Mammary epithelial cell (primary cell): ENCODE measurements at regions of chr3 and their contacts with region 1.

Region 1: DNA sequence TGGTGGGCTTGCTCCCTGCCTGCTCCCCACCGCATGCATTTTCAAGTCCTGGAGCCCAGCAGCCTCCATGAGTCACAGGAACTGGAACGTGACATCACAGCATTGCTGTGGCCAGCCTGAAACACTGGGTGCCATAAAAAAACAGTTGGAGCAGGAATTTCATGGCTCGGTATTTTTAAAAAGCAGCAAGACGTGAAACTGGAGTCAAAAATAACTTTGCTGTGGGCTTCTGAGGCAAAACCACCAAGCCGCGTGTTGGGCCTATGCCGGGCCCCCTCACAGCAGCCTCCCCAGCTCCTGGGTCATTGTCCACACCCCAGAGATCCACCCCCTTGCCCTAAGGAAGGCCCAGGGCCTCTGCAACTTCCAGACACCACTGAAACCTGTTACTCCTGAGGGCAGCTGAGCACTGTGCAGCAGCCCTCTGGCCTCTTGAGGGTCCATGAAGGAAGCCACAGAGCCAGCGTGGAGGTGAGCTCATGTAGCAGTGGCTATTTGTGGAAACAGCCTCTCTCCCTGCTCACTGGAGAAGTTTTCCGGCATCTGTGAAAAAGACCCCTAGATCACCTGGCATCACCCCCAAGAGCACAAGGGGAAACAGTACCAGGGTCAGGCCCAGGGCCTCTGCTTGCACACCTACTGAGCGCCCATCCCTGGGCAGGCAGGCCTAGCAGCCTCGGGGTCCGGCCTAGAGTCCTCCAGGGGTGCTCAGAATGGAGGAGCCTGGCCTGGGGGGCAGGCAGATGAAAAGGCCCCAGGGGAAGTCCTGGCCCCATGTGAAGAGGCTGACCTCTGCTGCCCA is 34.0 kb upstream of the DUSP7 start:
- DNase-seq: peak; percentile 54
- H3K4me3 ChIP-seq: no peak overlapping the region
- H3K27ac ChIP-seq: peak overlapping the region; percentile 4
- H3K4me1 ChIP-seq: peaks cover 20% of the 10 kb centered on the region
- H3K27me3 ChIP-seq: no peaks in the 10 kb centered on the region
- CTCF ChIP-seq: no peak

Region 2: DNA sequence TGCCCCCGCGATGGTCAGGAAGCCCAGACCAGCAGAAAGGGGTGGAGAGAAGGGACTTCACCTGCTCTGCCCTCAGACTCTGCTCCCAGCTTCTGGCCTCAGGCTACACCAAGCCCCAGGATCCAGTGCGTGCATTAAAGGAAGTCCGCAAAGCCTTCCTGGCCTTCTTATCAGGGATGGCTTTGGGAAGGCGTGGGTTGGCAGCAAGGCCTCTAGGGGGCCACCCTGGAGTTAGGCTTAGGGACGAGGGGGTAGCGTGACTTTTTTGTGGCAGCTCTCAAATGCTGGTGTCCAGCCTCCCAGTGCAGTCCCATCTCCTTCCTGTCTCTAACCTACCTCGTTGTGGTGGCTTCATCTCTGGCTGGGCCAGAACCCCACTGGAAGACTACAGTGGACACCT is 75.7 kb before region 1 on chr3:
- CTCF ChIA-PET with region 1: no interaction called
- dilution Hi-C with region 1: loop called (anchors 5 kb)
- in situ Hi-C with region 1: no loop called
- intact Hi-C with region 1: no loop called
- DNase-seq: no peak
- H3K4me3 ChIP-seq: no peak overlapping the region
- H3K27ac ChIP-seq: no peak overlapping the region
- H3K4me1 ChIP-seq: no peaks in the 10 kb centered on the region
- H3K27me3 ChIP-seq: no peaks in the 10 kb centered on the region
- CTCF ChIP-seq: peak in 1 of 2 donors; percentile 14

Region 3: GRCh38 chr3:52154117-52155094 is 64.1 kb after region 1 on chr3 and contains the start of gene POC1A:
- CTCF ChIA-PET with region 1: interaction called, 3 read pairs
- dilution Hi-C with region 1: loop called (anchors 5 kb)
- in situ Hi-C with region 1: no loop called
- intact Hi-C with region 1: no loop called
- DNase-seq: peak; percentile 97
- H3K4me3 ChIP-seq: peak within 1 kb of the TSS; percentile 58 to 77 (median 73)
- H3K27ac ChIP-seq: peak within 1 kb of the TSS; percentile 55
- H3K4me1 ChIP-seq: peaks cover 19% of the 10 kb centered on the region
- H3K27me3 ChIP-seq: no peaks in the 10 kb centered on the region
- CTCF ChIP-seq: no peak
- total RNA-seq, gene POC1A: 2.8 to 21.5 TPM

Region 4: GRCh38 chr3:52181543-52181942 is 91.2 kb after region 1 on chr3:
- CTCF ChIA-PET with region 1: no interaction called
- dilution Hi-C with region 1: loop called (anchors 5 kb)
- in situ Hi-C with region 1: no loop called
- intact Hi-C with region 1: no loop called
- DNase-seq: peak; percentile 57
- H3K4me3 ChIP-seq: no peak overlapping the region
- H3K27ac ChIP-seq: no peak overlapping the region
- H3K4me1 ChIP-seq: peaks cover 7% of the 10 kb centered on the region
- H3K27me3 ChIP-seq: no peaks in the 10 kb centered on the region
- CTCF ChIP-seq: no peak